Head of caudate nucleus (tissue), 42 donors: ENCODE measurements at regions of chr20 and their contacts with region 1.

Region 1: GRCh38 chr20:47318586-47319516 is 37.6 kb downstream of the ZMYND8 start:
- DNase-seq: peak; percentile 39 to 80 (median 59)

Region 2: GRCh38 chr20:47099825-47100441 is 218.9 kb before region 1 on chr20:
- intact Hi-C with region 1: no loop called
- DNase-seq: no peak

Region 3: DNA sequence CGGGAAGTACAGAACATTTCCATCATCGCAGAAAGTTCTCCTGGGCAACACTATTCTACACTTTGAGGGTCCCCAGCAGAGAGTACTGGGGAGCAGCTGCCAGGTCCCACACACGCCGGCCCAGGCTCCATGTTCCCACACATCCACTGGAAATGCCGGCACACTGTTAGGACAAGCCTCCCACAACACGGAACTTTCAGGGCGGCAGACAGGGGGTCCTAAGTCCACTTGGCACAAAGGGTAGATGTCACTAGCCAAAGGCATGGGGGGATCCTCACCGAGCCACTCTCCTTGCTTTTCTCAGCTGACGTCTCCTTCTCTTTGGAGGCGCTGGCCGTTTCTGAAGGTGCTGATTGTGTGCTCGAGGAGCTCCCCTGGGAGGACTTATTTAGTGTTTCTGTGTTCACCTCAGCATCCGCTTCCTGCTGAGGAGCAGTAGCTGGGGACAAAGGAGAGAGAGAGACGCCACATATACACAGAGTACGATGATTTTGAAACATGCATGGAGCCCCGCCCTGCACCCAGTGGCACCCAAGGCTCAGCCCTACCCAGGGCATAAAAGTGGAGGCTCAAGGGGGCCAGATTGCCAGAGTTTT is 97.7 kb before region 1 on chr20:
- intact Hi-C with region 1: no loop called
- DNase-seq: no peak

Region 4: GRCh38 chr20:47356526-47357295 is 37.9 kb after region 1 on chr20 and contains the start of gene ZMYND8:
- intact Hi-C with region 1: loop called (anchors 2 kb)
- DNase-seq: peak; percentile 91 to 99 (median 97)

Region 5: DNA sequence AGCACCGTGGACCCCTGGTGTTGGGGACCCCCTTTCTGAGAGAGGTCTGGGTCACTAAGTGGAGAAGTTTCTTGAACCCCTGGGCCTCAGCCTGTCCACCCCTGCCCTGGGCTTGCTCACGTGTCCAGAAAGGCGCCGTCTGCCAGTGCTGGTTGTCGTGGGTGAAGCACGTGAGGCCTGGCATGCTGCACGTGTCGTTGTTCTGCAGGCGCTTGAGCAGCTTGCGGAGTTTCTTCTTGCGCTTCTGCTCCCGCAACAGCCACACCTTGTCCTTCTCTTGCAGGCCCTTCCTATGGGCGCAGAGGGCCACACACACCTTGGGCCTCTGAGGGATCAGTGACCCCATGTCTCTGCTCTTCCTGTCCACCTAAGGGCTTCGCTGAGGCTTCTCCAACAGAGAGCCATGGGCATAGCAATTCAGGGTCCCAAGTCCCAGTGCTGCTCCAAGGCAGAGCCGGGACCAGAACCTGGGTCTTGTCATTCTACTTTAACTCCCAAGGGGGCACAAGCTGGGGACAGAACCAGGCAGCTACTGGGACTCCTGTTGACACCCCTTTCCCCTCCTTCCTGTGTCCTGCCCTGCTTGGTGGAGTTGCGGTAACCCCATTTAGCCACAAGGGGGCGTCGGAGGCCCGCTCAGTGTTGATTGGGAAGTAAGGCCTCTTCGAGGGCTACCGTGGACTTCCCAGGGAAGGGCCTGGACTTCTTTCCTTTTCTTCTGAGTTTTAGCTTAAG is 344.6 kb after region 1 on chr20:
- intact Hi-C with region 1: no loop called
- DNase-seq: peak; percentile 37 to 92 (median 82)